Aorta (tissue), 5 donors: ENCODE measurements at regions of chr6 and their contacts with region 1.

Region 1: GRCh38 chr6:35327349-35328027 is 14.9 kb upstream of the PPARD start:
- DNase-seq: peak in 1 of 2 donors; percentile 74
- ATAC-seq: peak; percentile 83
- H3K4me3 ChIP-seq: no peak overlapping the region
- H3K27ac ChIP-seq: no peak overlapping the region
- H3K4me1 ChIP-seq: no peaks in the 10 kb centered on the region
- H3K27me3 ChIP-seq: no peaks in the 10 kb centered on the region

Region 2: DNA sequence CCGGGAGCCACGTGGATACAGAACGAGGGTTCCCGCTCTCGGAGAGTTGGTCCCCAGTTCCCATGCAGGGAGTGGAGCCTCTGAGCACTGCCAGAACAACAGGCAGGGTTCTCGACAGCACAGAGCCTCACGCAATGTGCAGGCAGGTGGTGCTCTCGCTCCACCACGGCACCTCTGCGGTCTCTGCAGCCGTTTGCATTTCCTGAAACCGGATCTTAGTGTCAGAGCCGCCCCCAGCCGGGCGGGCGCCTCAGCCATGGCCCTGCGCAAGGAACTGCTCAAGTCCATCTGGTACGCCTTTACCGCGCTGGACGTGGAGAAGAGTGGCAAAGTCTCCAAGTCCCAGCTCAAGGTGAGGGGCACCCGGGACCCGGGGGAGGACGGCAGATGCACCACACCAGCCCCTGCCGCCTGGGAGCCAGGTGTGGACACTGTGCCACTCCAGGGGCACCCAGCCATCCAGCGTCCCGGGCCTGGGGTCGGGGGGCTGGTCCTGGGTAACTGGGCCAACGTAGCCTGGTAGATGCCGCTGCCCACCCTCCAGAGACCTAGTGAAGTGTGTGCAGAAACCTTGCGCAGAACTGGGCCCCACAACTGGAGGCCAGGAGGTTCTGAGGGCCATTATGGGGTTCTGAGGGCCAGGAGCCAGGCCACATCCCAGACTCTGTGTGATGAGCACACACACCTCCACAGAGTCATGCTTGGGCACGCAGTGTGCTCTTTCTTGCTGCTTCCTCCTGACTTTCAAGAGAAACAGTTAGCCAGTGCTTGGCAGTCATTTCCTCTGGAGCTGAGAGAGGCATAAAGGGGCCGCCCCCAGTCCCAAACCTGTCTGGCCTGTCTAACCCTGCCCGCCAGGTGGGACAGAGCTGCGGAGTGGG is 29.6 kb before region 1 on chr6 and contains the start of gene DEF6:
- intact Hi-C with region 1: loop called in 1 of 2 experiments (anchors 2 kb)
- DNase-seq: peak; percentile 87 to 89
- ATAC-seq: peak; percentile 88
- H3K4me3 ChIP-seq: no peak within 1 kb of the TSS
- H3K27ac ChIP-seq: no peak within 1 kb of the TSS
- H3K4me1 ChIP-seq: no peaks in the 10 kb centered on the region
- H3K27me3 ChIP-seq: no peaks in the 10 kb centered on the region
- total RNA-seq, gene DEF6: 9.9 to 13.0 TPM

Region 3: DNA sequence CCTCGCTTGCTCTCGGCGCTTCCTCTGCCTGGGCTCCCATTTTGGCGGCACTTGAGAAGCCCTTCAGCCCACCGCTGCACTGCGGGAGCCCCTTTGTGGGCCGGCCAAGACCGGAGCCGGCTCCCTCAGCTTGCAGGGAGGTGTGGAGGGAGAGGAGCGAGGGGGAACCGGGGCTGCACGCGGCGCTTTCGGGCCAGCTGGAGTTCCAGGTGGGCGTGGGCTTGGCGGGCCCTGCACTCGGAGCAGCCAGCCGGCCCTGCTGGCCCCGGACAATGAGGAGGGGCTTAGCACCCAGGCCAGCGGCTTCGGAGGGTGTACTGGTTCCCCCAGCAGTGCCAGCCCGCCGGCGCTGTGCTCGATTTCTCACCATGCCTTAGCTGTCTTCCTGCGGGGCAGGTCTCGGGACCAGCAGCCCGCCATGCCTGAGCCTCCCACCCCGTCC is 603.7 kb after region 1 on chr6:
- intact Hi-C with region 1: no loop called
- DNase-seq: no peak
- ATAC-seq: no peak
- H3K4me3 ChIP-seq: no peak overlapping the region
- H3K27ac ChIP-seq: no peak overlapping the region
- H3K4me1 ChIP-seq: no peaks in the 10 kb centered on the region
- H3K27me3 ChIP-seq: no peaks in the 10 kb centered on the region